Activated T-helper 1 cell treated with anti-CD3 and anti-CD28 coated beads, Interleukin-12 subunit alpha, Interleukin-12 subunit beta, Interleukin-2, Interleukin-4 antibody, amounts not matched to agents 30 ng/mL and 10 ng/mL and 1 ng/mL, durations not matched to agents 14 hours and 24 hours and 36 hours (primary cell): ENCODE measurements at regions of chr11 and their contacts with region 1.

Region 1: GRCh38 chr11:86068951-86069407 is at the start of gene PICALM:
- DNase-seq: peak; percentile 97
- H3K4me3 Mint-ChIP-seq: peak within 1 kb of the TSS; percentile 92
- H3K27ac Mint-ChIP-seq: peak within 1 kb of the TSS; percentile 97
- H3K4me1 Mint-ChIP-seq: peaks cover 33% of the 10 kb centered on the region
- H3K27me3 Mint-ChIP-seq: no peaks in the 10 kb centered on the region
- total RNA-seq, gene PICALM: 174 and 177 TPM in 2 replicates

Region 2: GRCh38 chr11:85627998-85628770 is 440.8 kb before region 1 on chr11 and contains the start of gene TMEM126B:
- intact Hi-C with region 1: loop called (anchors 1 kb)
- DNase-seq: peak; percentile 96
- H3K4me3 Mint-ChIP-seq: peak within 1 kb of the TSS; percentile 97
- H3K27ac Mint-ChIP-seq: peak within 1 kb of the TSS; percentile 94
- H3K4me1 Mint-ChIP-seq: peaks cover 52% of the 10 kb centered on the region
- H3K27me3 Mint-ChIP-seq: peaks cover 6% of the 10 kb centered on the region
- total RNA-seq, gene TMEM126B: 52.5 and 57.2 TPM in 2 replicates

Region 3: GRCh38 chr11:86041975-86042378 is 27.0 kb before region 1 on chr11:
- intact Hi-C with region 1: loop called (anchors 1 kb)
- DNase-seq: peak; percentile 48
- H3K4me3 Mint-ChIP-seq: peak overlapping the region; percentile 43
- H3K27ac Mint-ChIP-seq: peak overlapping the region; percentile 71
- H3K4me1 Mint-ChIP-seq: peaks cover 63% of the 10 kb centered on the region
- H3K27me3 Mint-ChIP-seq: no peaks in the 10 kb centered on the region

Region 4: DNA sequence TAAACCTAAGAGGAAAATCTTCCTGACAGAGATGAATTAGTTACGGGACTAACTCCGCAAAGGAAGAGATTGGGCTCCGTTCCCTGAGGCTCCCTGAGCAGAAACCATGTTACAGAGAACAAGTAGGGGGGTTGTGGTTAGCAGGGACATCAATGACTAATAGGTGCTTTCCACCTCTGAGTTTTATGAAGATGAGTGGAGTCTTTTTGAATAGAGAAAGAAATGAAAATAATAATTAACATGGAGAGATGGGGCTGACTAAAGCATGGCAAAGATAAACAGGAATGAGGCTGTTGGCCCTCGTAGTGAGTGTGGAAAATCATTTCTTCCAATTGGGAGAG is 47.4 kb after region 1 on chr11:
- intact Hi-C with region 1: loop called (anchors 5 kb)
- DNase-seq: no peak
- H3K4me3 Mint-ChIP-seq: peak overlapping the region; percentile 9
- H3K27ac Mint-ChIP-seq: peak overlapping the region; percentile 70
- H3K4me1 Mint-ChIP-seq: peaks cover 30% of the 10 kb centered on the region
- H3K27me3 Mint-ChIP-seq: no peaks in the 10 kb centered on the region

Region 5: DNA sequence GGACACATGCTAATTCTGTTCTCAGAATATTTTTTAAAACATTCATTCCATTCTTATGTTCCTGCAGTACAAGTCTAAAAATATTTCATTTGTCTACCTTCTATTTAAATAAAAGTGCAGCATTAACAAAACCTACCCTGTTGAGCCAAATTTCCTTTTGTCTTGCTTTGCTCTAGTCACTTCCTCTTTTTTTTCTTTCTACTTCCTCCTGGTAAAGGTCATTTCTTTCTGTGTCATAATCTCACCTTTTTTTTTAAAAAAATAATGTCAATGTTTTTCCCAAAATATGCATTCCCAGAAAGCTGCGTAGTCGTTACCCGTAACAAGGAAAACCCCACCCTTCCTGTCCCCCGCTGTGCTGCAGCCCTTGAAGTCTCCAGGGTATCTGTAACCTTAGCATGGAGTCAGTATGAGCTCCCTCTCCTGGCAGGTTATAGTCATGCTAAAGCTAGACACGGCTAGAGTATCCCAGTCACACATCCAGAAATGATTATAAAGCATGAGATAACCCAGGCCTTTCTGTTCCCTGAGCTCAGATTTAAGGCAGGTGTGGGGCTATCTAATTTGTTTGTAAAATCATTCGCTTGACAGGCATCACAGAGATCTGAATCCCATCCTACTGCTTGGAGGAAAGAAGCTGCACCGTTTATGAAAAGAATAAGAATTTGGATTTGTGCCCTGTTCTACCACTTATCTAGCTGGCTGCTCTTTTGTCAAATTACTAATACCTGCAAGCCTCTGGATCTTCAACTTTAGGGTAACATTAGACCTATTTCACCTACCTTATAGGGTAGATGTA is 124.5 kb after region 1 on chr11:
- intact Hi-C with region 1: loop called (anchors 1 kb)
- DNase-seq: peak; percentile 58
- H3K4me3 Mint-ChIP-seq: peak overlapping the region; percentile 58
- H3K27ac Mint-ChIP-seq: peak overlapping the region; percentile 54
- H3K4me1 Mint-ChIP-seq: peaks cover 43% of the 10 kb centered on the region
- H3K27me3 Mint-ChIP-seq: no peaks in the 10 kb centered on the region

Region 6: DNA sequence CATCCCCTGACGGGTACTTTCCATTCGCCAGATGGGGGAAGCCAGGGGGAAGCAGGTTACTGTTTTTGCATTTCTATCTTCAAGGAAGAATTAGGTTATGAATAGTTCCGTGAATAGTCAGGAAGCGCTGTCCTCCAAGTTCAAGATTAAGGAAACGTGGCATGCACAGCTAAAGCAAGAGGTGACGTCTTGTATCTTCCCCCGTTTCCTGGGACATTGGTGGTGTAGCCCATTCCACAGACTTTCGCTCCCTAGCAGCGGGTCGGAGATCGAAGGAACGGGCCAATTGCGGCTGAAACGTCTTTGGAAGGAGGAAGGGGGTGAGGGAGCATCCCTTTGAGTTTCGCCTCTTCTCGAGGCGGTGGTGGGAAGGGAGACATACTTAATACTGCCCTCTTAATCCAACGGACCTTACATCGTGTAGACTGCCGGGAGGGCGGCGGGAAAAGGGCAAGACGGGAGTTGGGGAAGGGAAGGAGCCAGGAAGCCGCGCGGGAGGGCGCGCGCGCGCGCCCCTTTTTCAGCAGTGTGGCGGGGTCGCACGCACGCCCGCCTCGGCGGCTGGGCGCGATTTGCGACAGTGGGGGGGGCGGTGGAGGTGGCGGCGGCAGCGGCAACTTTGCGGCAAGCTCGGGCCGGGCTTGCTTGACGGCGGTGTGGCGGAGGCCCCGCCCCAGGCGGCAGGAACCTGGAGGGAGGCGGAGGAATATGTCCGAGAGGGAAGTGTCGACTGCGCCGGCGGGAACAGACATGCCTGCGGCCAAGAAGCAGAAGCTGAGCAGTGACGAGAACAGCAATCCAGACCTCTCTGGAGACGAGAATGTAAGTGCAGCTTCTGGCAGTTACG is 175.8 kb after region 1 on chr11 and contains the start of gene EED:
- intact Hi-C with region 1: loop called (anchors 1 kb)
- DNase-seq: peak; percentile 93
- H3K4me3 Mint-ChIP-seq: no peak within 1 kb of the TSS
- H3K27ac Mint-ChIP-seq: no peak within 1 kb of the TSS
- H3K4me1 Mint-ChIP-seq: peaks cover 43% of the 10 kb centered on the region
- H3K27me3 Mint-ChIP-seq: no peaks in the 10 kb centered on the region
- total RNA-seq, gene EED: 279 and 294 TPM in 2 replicates